CD4-positive, alpha-beta memory T cell (primary cell): ENCODE measurements at regions of chr5 and their contacts with region 1.

Region 1: DNA sequence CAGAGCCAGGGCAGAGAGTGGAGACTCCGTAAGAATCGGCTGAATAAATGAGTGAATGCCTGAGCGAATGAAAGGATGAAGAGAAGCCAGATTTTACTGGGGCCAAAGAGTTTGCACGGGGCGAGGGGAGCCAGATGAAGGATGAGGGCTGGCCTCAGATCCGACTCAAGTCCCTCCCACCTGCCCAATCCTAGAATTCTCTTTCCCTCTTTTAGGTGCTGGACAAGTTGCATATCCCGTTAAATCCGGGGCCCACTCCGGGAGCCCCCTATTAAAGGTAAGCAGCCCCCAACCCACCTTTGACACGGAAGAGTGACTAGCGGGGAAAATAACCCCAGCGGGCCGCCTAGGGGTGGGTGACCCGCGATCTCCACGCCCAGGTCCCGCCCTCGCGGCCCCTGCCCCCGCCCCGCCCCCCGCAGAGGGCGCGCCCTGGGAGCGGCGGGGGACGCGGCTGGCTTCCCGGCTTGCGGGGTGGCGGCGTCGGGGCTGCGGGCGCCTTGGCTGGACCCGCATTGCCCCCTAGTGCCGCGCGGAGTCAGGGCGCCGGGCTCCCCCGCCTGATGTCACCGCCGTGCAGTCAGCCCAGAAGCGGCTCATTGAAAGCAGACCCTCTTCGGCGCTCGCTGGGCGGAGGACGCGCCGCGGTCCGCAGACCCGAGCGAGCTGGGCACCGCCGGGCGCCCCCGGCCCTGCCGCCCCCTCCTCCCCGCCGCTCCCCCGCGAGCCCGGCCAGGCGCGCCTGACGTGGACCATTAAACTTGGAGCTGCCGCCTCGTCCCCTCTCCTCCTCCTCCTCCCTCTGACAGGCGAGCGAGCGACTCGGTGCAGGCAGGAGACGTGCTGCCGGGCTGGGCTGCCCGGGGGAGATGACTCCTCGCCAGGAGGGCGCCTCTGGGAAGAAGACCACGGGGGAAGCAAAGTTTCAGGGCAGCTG is at the start of gene ADRA1B:
- DNase-seq: peak in 4 of 5 donors; percentile 17 to 32 (median 26)
- H3K4me3 ChIP-seq: no peak within 1 kb of the TSS
- H3K4me3 Mint-ChIP-seq: peak within 1 kb of the TSS; percentile 7 to 82 (median 68)
- H3K27ac ChIP-seq: no peak within 1 kb of the TSS
- H3K27ac Mint-ChIP-seq: peak within 1 kb of the TSS in 2 of 7 donors; percentile 53 to 63
- H3K4me1 ChIP-seq: peaks cover 5% of the 10 kb centered on the region
- H3K4me1 Mint-ChIP-seq: peaks cover 7 to 16% (median 11%) of the 10 kb centered on the region in 4 donors
- H3K27me3 ChIP-seq: peaks cover 17% of the 10 kb centered on the region
- H3K27me3 Mint-ChIP-seq: peaks cover 42 to 64% of the 10 kb centered on the region in 2 donors
- total RNA-seq, gene ADRA1B: not detected

Region 2: GRCh38 chr5:159444441-159445082 is 471.6 kb before region 1 on chr5:
- CTCF ChIA-PET with region 1: interaction called, 3 read pairs
- POLR2A ChIA-PET with region 1: no interaction called
- intact Hi-C with region 1: loop called (anchors 2 kb)
- DNase-seq: peak in 4 of 5 donors; percentile 26 to 49 (median 32)
- H3K4me3 ChIP-seq: no peak overlapping the region
- H3K4me3 Mint-ChIP-seq: no peak overlapping the region
- H3K27ac ChIP-seq: no peak overlapping the region
- H3K27ac Mint-ChIP-seq: peak overlapping the region in 1 of 7 donors; percentile 35
- H3K4me1 ChIP-seq: no peaks in the 10 kb centered on the region
- H3K4me1 Mint-ChIP-seq: peaks cover 0 to 6% (median 5%) of the 10 kb centered on the region in 4 donors
- H3K27me3 ChIP-seq: no peaks in the 10 kb centered on the region
- H3K27me3 Mint-ChIP-seq: no peaks in the 10 kb centered on the region

Region 3: GRCh38 chr5:159515909-159516415 is 400.2 kb before region 1 on chr5:
- CTCF ChIA-PET with region 1: no interaction called
- POLR2A ChIA-PET with region 1: no interaction called
- intact Hi-C with region 1: loop called (anchors 5 kb)
- DNase-seq: peak; percentile 41 to 59 (median 56)
- H3K4me3 ChIP-seq: no peak overlapping the region
- H3K4me3 Mint-ChIP-seq: peak overlapping the region in 2 of 8 donors; percentile 30 to 71
- H3K27ac ChIP-seq: no peak overlapping the region
- H3K27ac Mint-ChIP-seq: no peak overlapping the region
- H3K4me1 ChIP-seq: no peaks in the 10 kb centered on the region
- H3K4me1 Mint-ChIP-seq: peaks cover 5 to 8% (median 8%) of the 10 kb centered on the region in 4 donors
- H3K27me3 ChIP-seq: no peaks in the 10 kb centered on the region
- H3K27me3 Mint-ChIP-seq: no peaks in the 10 kb centered on the region

Region 4: DNA sequence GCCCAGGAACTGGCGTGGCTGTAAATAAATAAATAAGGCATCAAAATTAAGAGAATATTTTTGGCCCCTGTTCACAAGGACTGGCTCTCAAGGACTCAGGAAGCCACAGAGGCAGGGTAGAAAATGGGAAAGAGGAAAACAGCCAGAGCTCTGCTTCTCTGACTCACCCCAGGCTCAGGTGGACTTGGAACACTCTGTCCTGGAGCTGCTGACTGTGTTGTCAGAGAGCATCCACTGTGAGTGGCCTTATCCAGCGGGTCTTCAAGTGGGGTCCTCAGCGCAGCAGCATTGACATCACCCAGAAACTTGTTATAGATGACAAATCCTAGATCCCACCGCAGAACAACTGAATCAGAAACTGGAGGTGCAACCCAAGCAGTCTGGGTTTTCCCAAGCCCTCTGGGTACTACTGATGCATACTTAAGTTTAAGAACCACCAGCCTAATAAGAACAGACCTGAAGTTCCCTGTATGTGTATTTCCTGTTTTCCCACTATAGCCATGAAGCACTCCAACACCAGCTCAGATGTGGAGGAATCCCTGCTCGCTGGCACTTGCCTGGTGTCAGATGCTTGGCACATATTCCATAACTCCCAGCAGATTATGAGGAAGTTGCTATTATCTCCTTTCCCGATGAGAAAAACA is 20.6 kb after region 1 on chr5:
- CTCF ChIA-PET with region 1: no interaction called
- POLR2A ChIA-PET with region 1: no interaction called
- intact Hi-C with region 1: no loop called
- DNase-seq: no peak
- H3K4me3 ChIP-seq: no peak overlapping the region
- H3K4me3 Mint-ChIP-seq: no peak overlapping the region
- H3K27ac ChIP-seq: no peak overlapping the region
- H3K27ac Mint-ChIP-seq: no peak overlapping the region
- H3K4me1 ChIP-seq: no peaks in the 10 kb centered on the region
- H3K4me1 Mint-ChIP-seq: peaks cover 0 to 7% (median 4%) of the 10 kb centered on the region in 4 donors
- H3K27me3 ChIP-seq: no peaks in the 10 kb centered on the region
- H3K27me3 Mint-ChIP-seq: peaks cover 14 to 26% of the 10 kb centered on the region in 2 donors